Esophagus squamous epithelium (tissue), 5 donors: ENCODE measurements at regions of chr19 and their contacts with region 1.

Region 1: DNA sequence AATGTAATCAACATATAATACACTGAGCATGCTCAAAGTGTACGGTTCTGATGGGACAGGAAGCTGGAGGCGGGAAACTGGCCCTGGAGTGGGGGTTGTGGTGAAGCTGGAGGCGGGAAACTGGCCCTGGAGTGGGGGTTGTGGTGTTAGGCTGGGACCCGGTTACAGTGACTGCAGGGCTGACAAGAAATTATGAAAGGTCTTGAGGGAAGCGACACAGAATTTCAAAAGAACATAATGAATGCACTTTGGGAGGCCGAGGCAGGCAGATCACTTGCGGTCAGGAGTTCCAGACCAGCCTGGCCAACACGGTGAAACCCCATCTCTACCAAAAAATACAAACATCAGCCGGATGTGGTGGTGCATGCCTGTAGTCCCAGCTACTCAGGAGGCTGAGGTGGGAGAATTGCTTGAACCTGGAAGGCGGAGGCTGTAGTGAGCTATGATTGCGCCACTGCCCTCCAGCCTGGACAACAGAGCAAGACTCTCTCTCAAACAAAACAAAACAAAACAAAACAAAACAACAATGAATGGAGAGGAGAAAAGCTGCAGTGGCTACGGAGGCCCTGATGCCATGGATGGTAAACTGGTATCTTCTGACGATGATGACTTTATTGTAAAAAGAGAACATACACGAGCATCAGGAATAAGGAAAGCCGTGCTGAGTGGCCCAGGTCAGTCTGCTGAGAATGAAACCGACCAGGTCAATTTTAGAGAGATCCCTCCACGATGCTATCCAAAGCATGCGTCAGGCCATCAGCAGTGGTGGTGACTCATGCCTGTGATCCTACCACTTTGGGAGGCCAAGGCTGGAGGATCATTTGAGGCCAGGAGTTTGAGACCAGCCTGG is 61.9 kb downstream of the GADD45B start:
- DNase-seq: no peak
- H3K4me3 ChIP-seq: no peak overlapping the region
- H3K27ac ChIP-seq: no peak overlapping the region
- H3K4me1 ChIP-seq: peaks cover 22 to 41% (median 26%) of the 10 kb centered on the region in 3 donors
- H3K27me3 ChIP-seq: no peaks in the 10 kb centered on the region
- CTCF ChIP-seq: no peak
- POLR2A ChIP-seq: no peak

Region 2: GRCh38 chr19:2455851-2456570 is 81.8 kb before region 1 on chr19:
- intact Hi-C with region 1: no loop called
- DNase-seq: no peak
- H3K4me3 ChIP-seq: peak overlapping the region; percentile 83 to 100 (median 98)
- H3K27ac ChIP-seq: peak overlapping the region; percentile 79 to 88 (median 84)
- H3K4me1 ChIP-seq: peaks cover 7 to 27% (median 9%) of the 10 kb centered on the region in 3 donors
- H3K27me3 ChIP-seq: no peaks in the 10 kb centered on the region
- CTCF ChIP-seq: no peak
- POLR2A ChIP-seq: peak in 1 of 4 donors; percentile 26

Region 3: DNA sequence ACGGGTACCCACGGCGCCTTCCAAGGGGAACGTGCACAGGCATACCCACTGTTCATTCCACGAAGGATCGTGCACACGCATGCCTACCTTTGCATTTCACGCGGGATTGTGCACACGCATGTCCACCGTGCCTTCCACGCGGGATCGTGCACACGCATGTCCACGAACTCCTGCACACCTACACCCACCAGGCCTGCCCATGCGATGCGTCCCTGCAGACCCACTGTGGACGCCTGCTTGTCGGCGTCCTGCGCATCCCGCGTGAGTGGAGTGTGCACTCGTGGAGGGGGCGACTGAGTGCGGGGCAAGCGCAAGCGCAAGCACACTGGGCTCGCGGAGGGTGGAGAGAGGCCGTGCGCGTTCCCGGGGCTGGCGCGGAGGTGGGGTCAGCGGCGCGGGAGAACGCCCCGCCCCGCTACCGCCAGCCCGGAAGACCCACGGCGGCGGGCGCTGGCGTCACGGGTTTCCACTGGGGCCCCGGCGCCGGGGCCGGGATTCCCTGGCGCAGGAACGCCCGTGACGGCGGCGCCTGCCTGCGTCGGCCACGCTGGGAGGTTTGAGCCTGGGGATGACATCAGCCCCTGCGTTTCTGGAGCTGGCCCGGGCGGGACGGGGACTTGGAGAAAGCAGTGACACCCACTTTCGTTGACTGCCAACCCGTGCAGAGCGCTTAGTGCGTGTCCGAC is 43.2 kb before region 1 on chr19:
- intact Hi-C with region 1: loop called (anchors 5 kb)
- DNase-seq: no peak
- H3K4me3 ChIP-seq: peak overlapping the region; percentile 34 to 70 (median 52)
- H3K27ac ChIP-seq: peak overlapping the region; percentile 77 to 90 (median 86)
- H3K4me1 ChIP-seq: peaks cover 33 to 72% (median 42%) of the 10 kb centered on the region in 3 donors
- H3K27me3 ChIP-seq: peaks cover 0 to 4% (median 0%) of the 10 kb centered on the region in 4 donors
- CTCF ChIP-seq: no peak
- POLR2A ChIP-seq: peak in 2 of 4 donors; percentile 39 to 51

Region 4: DNA sequence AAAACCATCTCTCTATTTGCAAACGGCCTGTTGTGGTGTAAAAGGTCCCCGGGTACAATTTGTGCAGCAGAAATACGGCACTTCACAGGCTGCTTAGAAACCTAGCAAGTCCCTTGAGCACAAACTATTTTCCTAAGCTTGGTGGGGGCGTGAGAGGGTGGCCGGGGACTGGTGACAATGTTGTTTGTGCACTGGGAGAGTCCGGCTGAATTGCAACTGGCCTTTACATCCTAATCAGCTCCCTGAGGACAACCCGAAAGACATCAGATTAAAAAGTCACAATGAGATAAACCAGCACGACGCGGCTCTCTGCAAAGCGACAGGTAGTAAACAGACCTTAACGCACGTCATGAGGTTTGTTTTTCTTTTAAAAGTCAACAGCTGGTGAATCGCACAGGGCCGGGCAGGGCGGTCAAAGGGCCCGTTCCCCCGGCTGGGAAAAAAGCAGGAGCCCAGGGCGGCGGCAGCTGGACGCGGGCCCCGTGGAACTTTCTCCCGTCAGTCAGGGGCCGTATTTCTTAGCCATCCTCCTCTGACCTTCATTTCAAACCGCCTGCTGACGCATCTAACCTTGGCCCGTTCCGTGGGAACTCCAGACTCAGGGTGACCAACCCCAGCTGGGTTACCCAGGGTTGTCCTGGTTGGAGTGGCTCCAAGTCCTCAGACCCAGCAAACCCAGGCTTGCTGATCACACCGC is 50.4 kb after region 1 on chr19:
- intact Hi-C with region 1: no loop called
- DNase-seq: no peak
- H3K4me3 ChIP-seq: no peak overlapping the region
- H3K27ac ChIP-seq: peak overlapping the region in 3 of 4 donors; percentile 45 to 77 (median 68)
- H3K4me1 ChIP-seq: peaks cover 0 to 21% (median 0%) of the 10 kb centered on the region in 3 donors
- H3K27me3 ChIP-seq: no peaks in the 10 kb centered on the region
- CTCF ChIP-seq: no peak
- POLR2A ChIP-seq: no peak